PC-9 (cell line): ENCODE measurements at regions of chr7 and their contacts with region 1.

Region 1: GRCh38 chr7:102390697-102391484 is 5.3 kb upstream of the PRKRIP1 start:
- DNase-seq: peak; percentile 66 to 88
- H3K4me3 ChIP-seq: no peak overlapping the region
- H3K27ac ChIP-seq: no peak overlapping the region
- H3K4me1 ChIP-seq: peaks cover 34% of the 10 kb centered on the region
- H3K27me3 ChIP-seq: no peaks in the 10 kb centered on the region
- CTCF ChIP-seq: peak; percentile 89

Region 2: DNA sequence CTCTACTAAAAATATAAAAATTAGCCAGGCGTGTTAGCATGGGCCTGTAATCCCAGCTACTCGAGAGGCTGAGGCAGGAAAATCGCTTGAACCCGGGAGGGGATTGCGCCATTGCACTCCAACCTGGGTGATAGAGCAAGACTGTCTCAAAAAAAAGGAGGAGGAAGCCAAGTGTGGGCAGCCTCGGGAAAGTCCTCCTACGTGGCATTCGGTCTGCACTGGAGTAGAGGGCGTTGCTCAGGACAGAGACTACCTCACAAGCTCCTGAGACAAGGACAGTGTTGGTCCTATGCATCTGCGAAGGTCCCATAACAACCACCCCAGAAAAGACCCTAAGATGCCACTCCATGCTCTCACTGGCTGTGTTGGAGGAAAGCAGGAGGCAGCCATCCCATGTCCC is 1274.0 kb before region 1 on chr7:
- CTCF ChIA-PET with region 1: no interaction called
- POLR2A ChIA-PET with region 1: interaction called, 14 read pairs
- intact Hi-C with region 1: no loop called
- DNase-seq: no peak
- H3K4me3 ChIP-seq: no peak overlapping the region
- H3K27ac ChIP-seq: peak overlapping the region; percentile 99
- H3K4me1 ChIP-seq: peaks cover 58% of the 10 kb centered on the region
- H3K27me3 ChIP-seq: no peaks in the 10 kb centered on the region
- CTCF ChIP-seq: no peak

Region 3: DNA sequence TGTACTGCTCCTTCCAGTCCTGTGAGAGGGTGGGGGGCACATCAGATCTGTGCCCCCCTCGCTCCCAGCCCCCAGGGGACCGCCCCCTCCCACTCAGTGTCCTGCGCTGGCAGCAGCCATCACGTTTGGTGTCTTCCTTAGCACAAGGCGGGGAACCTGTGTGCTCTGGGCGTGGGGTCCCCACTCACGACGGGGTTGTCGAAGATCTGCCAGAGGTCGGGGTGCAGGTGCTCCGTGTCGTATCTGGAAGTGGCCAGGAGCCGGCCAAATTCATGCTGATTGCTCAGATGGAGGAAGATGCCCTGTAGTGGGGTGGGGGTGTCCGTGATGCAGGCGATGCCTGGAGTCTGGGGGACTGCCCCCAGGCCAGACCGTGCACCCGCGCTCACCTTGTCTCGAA is 1180.7 kb before region 1 on chr7:
- CTCF ChIA-PET with region 1: no interaction called
- POLR2A ChIA-PET with region 1: interaction called, 17 read pairs
- intact Hi-C with region 1: no loop called
- DNase-seq: no peak
- H3K4me3 ChIP-seq: no peak overlapping the region
- H3K27ac ChIP-seq: no peak overlapping the region
- H3K4me1 ChIP-seq: no peaks in the 10 kb centered on the region
- H3K27me3 ChIP-seq: no peaks in the 10 kb centered on the region
- CTCF ChIP-seq: no peak

Region 4: DNA sequence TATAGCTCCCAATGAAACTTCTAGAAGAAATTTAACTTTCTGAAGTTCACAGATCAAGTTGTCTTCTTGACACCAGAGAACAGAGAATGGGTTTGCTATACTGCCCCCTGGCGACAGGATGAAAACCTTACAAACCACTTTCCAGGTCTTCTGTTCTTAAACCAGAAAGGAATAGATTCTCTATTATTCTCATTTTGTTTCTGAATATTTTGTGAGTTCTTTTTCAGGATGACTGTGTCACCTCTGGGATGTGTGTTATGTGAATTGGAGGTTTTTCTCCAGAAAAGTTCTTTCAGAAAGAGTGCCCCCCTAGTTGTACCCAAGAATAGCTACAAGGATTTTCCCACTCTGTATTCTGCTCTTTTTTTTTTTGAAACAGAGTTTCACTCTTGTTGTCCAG is 1075.6 kb before region 1 on chr7:
- CTCF ChIA-PET with region 1: no interaction called
- POLR2A ChIA-PET with region 1: interaction called, 30 read pairs
- intact Hi-C with region 1: no loop called
- DNase-seq: peak in 1 of 2 experiments; percentile 21
- H3K4me3 ChIP-seq: no peak overlapping the region
- H3K27ac ChIP-seq: no peak overlapping the region
- H3K4me1 ChIP-seq: no peaks in the 10 kb centered on the region
- H3K27me3 ChIP-seq: no peaks in the 10 kb centered on the region
- CTCF ChIP-seq: peak; percentile 78

Region 5: GRCh38 chr7:102266541-102266940 is 124.3 kb before region 1 on chr7:
- CTCF ChIA-PET with region 1: interaction called, 10 read pairs
- POLR2A ChIA-PET with region 1: no interaction called
- intact Hi-C with region 1: no loop called
- DNase-seq: no peak
- H3K4me3 ChIP-seq: no peak overlapping the region
- H3K27ac ChIP-seq: no peak overlapping the region
- H3K4me1 ChIP-seq: no peaks in the 10 kb centered on the region
- H3K27me3 ChIP-seq: no peaks in the 10 kb centered on the region
- CTCF ChIP-seq: no peak

Region 6: GRCh38 chr7:102279537-102280400 is 111.1 kb before region 1 on chr7:
- CTCF ChIA-PET with region 1: interaction called, 7 read pairs
- POLR2A ChIA-PET with region 1: no interaction called
- intact Hi-C with region 1: loop called (anchors 1 kb)
- DNase-seq: peak in 1 of 2 experiments; percentile 67
- H3K4me3 ChIP-seq: no peak overlapping the region
- H3K27ac ChIP-seq: no peak overlapping the region
- H3K4me1 ChIP-seq: no peaks in the 10 kb centered on the region
- H3K27me3 ChIP-seq: no peaks in the 10 kb centered on the region
- CTCF ChIP-seq: peak; percentile 78